Posterior cingulate gyrus (tissue), 11 donors: ENCODE measurements at regions of chr5 and their contacts with region 1.

Region 1: GRCh38 chr5:138331449-138332368 is at the start of gene CDC25C:
- DNase-seq: peak; percentile 89 to 100 (median 96)

Region 2: DNA sequence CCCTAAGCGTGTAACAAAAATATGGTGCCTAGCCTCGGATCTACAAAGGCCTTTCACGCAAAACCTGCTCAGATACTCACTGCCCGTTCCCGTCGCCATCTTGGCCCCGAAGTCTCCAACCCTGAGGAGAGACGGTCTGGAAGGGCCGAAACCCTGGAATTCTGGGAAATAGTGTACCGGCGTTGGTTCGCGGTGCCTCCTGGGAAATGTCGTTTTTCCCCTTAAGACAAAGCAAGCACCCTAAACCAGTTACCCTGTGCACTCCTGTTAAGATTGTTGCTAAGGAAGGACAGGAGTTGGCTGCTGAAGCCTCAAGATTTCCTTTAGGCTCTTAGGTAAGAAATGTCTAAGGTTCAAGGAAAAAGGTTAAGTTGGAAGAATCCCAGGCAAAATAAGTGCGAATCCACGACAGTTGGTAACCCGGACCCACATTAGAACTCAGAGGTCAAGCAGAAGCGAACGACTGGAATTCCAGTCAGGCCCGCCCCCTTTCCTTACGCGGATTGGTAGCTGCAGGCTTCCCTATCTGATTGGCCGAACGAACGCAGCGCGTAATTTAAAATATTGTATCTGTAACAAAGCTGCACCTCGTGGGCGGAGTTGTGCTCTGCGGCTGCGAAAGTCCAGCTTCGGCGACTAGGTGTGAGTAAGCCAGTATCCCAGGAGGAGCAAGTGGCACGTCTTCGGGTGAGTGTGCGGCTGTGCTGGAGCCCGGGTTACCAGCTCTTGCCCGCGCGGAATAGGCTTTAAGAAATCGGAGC is 153.0 kb before region 1 on chr5 and contains the starts of genes BRD8 and KIF20A:
- intact Hi-C with region 1: loop called (anchors 10 kb)
- DNase-seq: peak; percentile 91 to 99 (median 96)